IMR-90 (cell line): ENCODE measurements at regions of chr9 and their contacts with region 1.

Region 1: GRCh38 chr9:20570756-20571155 is 51.5 kb downstream of the MLLT3 start:
- DNase-seq: peak; percentile 87
- ATAC-seq: peak; percentile 94
- H3K4me3 ChIP-seq: no peak overlapping the region; the same call in 1 of the 2 replicates
- H3K27ac ChIP-seq: peak overlapping the region; percentile 58; the same call in 1 of the 2 replicates
- H3K4me1 ChIP-seq: peaks cover 6% of the 10 kb centered on the region
- H3K27me3 ChIP-seq: no peaks in the 10 kb centered on the region
- CTCF ChIP-seq: no peak
- POLR2A ChIP-seq: no peak
- RAD21 ChIP-seq: no peak

Region 2: GRCh38 chr9:20604562-20604961 is 33.8 kb after region 1 on chr9:
- CTCF ChIA-PET with region 1: interaction called, 5 read pairs
- POLR2A ChIA-PET with region 1: no interaction called
- dilution Hi-C with region 1: no loop called
- in situ Hi-C with region 1: no loop called
- intact Hi-C with region 1: loop called (anchors 2 kb)
- DNase-seq: peak; percentile 61
- ATAC-seq: peak; percentile 87
- H3K4me3 ChIP-seq: peak overlapping the region; percentile 42; the same call in 1 of the 2 replicates
- H3K27ac ChIP-seq: no peak overlapping the region; the same call in 1 of the 2 replicates
- H3K4me1 ChIP-seq: peaks cover 1% of the 10 kb centered on the region
- H3K27me3 ChIP-seq: no peaks in the 10 kb centered on the region
- CTCF ChIP-seq: no peak
- POLR2A ChIP-seq: no peak
- RAD21 ChIP-seq: no peak

Region 3: DNA sequence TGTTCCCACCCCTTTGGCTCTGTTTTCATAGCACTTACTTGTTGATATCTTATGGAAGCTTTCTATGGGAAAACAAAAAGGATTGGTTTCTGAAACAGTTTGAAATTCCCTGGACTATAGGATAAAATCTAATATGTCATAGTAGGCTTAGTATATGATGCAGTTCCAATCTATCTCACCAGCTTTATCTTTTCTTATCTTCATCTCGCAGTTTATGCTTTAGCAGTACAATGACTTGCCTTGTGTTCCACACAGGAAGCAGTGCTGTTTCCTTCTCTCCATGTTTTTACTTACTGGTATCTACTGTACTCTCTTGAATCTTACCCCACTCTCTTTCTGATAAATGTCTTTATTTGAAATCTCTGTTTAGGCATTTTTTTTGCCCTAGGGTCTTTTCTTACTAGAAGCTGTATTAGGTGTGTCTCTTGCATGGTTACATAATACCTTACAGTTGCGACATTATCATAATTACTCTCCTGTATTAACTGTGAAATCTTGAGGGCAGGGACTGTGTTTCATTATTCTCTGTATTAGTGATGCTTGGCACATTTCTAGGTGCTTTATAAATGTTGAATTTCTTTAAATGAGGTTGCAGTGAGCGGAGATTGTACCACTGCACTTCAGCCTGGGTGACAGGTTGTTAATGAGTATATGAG is 189.6 kb after region 1 on chr9:
- CTCF ChIA-PET with region 1: no interaction called
- POLR2A ChIA-PET with region 1: no interaction called
- dilution Hi-C with region 1: no loop called
- in situ Hi-C with region 1: no loop called
- intact Hi-C with region 1: no loop called
- DNase-seq: no peak
- ATAC-seq: no peak
- H3K4me3 ChIP-seq: no peak overlapping the region
- H3K27ac ChIP-seq: no peak overlapping the region
- H3K4me1 ChIP-seq: no peaks in the 10 kb centered on the region
- H3K27me3 ChIP-seq: no peaks in the 10 kb centered on the region
- CTCF ChIP-seq: no peak
- POLR2A ChIP-seq: no peak
- RAD21 ChIP-seq: no peak

Region 4: DNA sequence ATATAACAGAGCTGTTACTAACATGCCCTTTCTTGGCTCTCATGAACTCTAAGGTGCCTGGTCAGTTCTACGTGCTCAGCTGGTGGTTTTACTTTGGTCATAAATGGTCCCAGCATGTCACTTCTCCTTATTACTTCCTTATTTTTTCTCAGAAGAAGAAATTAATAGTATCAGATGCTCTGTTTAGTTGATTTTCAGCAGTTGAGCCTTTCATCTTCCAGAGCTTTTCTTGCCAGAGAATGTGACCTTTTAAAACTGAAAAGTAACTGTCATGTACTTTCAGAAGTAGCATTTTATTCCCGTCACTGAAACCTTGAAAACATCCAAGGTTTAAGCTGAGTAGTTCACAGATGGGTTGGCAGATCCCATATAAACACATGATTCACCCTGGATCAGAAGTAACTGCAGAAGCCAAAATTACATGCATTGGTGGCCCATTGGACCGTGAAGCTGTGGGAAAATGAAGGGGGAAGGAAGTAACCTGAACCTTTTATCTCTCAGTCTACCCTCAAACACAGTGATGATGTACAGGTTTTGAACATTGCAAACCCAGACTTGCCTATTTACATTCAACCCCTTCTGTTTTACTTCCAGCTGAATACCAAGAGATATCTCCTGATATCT is 410.2 kb after region 1 on chr9:
- CTCF ChIA-PET with region 1: no interaction called
- POLR2A ChIA-PET with region 1: no interaction called
- dilution Hi-C with region 1: no loop called
- in situ Hi-C with region 1: no loop called
- intact Hi-C with region 1: loop called (anchors 5 kb)
- DNase-seq: peak; percentile 93
- ATAC-seq: peak; percentile 77
- H3K4me3 ChIP-seq: no peak overlapping the region
- H3K27ac ChIP-seq: peak overlapping the region; percentile 79; the same call in 1 of the 2 replicates
- H3K4me1 ChIP-seq: peaks cover 15% of the 10 kb centered on the region
- H3K27me3 ChIP-seq: no peaks in the 10 kb centered on the region
- CTCF ChIP-seq: no peak
- POLR2A ChIP-seq: no peak
- RAD21 ChIP-seq: no peak

Region 5: DNA sequence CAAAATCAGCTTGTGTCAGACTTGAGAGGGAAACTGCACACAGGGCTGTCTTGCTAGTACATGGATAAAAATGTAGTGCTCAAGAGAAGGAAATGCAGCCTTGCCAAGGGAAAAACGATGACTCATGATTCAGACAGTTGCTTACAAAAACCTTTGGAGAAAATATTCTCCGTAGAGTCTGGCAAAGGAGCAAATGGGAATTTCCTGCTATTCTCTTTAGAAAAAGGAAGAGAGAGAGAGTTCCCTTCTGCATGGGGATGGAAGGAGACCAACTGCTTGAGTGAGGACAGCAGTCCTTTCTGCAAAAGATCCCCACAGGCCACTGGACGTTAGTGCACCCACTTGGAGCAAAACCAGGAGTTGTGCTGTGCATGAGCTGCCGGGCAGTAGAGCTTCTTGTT is 499.4 kb after region 1 on chr9:
- CTCF ChIA-PET with region 1: no interaction called
- POLR2A ChIA-PET with region 1: interaction called, 13 read pairs
- dilution Hi-C with region 1: no loop called
- in situ Hi-C with region 1: no loop called
- intact Hi-C with region 1: no loop called
- DNase-seq: peak; percentile 98
- ATAC-seq: peak; percentile 99
- H3K4me3 ChIP-seq: no peak overlapping the region
- H3K27ac ChIP-seq: peak overlapping the region; percentile 76
- H3K4me1 ChIP-seq: peaks cover 2% of the 10 kb centered on the region
- H3K27me3 ChIP-seq: no peaks in the 10 kb centered on the region
- CTCF ChIP-seq: peak; percentile 14; the same call in 1 of the 2 replicates
- POLR2A ChIP-seq: no peak
- RAD21 ChIP-seq: no peak